ENCODE measurements at regions of chr2 and their contacts with region 1.

Region 1: DNA sequence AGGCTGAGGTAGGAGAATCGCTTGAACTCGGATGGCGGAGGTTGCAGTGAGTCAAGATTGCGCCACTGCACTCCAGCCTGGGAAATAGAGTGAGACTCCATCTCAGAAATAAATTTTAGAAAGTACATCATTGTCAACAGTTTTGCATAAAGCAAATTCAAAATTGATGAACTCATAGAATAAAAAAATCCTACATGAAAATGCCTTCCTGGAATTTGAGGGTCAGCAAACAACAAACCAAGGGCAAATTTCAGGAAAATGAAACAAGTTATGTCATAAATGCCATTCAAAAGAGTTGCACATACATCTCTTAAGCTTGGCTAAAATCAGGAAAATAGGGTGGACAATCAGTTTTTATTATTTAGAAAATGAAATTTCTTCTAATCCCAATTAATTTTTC is 45.1 kb downstream of the COL5A2 start:
- DNase-seq: no peak
- ATAC-seq: no peak
- H3K4me3 ChIP-seq: no peak overlapping the region
- H3K27ac ChIP-seq: no peak overlapping the region
- H3K4me1 ChIP-seq: peaks cover 8% of the 10 kb centered on the region
- H3K27me3 ChIP-seq: no peaks in the 10 kb centered on the region
- CTCF ChIP-seq: no peak
- POLR2A ChIP-seq: no peak
- RAD21 ChIP-seq: no peak

Region 2: GRCh38 chr2:189762551-189763298 is 628.2 kb after region 1 on chr2 and contains the start of gene OSGEPL1:
- CTCF ChIA-PET with region 1: interaction called, 10 read pairs
- POLR2A ChIA-PET with region 1: no interaction called
- dilution Hi-C with region 1: no loop called
- in situ Hi-C with region 1: no loop called
- intact Hi-C with region 1: no loop called
- DNase-seq: peak; percentile 90
- ATAC-seq: peak; percentile 95
- H3K4me3 ChIP-seq: peak within 1 kb of the TSS; percentile 69
- H3K27ac ChIP-seq: peak within 1 kb of the TSS; percentile 72
- H3K4me1 ChIP-seq: no peaks in the 10 kb centered on the region
- H3K27me3 ChIP-seq: no peaks in the 10 kb centered on the region
- CTCF ChIP-seq: peak; percentile 61
- POLR2A ChIP-seq: 0 out of 2 replicates have a peak, but pooled peaks have one; percentile 26
- RAD21 ChIP-seq: no peak; the same call in 1 of the 2 replicates
- total RNA-seq, gene OSGEPL1: 6.8 and 8.3 TPM in 2 replicates

Measured in IMR-90 (cell line).